ENCODE measurements at regions of chr10 and their contacts with region 1.

Region 1: DNA sequence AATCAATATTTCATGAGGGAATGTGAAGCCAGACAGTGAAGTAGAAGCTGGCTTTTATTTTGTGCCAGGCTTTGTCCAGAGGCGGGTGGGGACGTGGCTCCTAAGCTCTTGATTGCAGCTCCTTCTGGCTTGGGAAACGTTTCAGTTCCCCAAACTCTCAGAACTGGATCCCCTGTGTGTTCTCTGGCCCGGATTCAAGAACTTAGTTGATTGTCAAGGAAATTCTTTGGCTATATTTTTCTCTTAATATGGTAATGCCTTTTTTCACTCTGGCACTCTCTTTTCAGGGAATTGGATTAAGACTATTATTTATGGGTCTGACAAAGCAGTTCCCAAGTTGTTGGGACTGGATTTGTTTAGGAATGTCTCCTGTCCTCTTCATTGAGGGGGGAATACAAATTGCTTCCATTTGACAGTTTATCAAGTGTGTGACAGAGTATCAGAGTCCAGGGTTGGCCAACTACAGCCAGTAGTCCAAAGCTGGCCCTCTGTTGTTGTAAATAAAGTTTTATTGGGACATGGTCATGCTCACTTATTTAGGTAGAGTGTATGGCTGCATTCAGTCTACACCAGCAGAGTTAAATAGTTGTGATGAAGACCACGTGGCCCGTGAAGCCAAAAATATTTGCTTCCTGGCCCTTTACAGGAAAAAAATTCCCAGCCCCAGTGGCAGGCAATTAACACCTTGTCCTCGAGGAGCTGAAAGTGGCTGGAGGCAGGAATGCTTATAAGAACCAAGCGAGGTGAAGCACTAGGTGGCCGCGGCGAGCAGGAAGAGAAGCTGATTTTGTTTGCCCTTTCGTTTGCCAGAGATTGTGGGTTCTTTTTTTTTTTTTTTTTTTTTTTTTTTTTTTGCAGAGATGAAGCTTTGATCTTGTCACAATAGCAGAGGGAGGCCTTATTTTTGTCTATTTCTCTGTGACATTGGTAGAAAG is 34.3 kb downstream of the HTRA1 start:
- DNase-seq: no peak

Region 2: GRCh38 chr10:122446668-122447423 is 48.8 kb before region 1 on chr10:
- intact Hi-C with region 1: loop called (anchors 5 kb)
- DNase-seq: no peak

Measured in cardiac septum (tissue), 1 donor.